Lower lobe of right lung (tissue), 2 donors: ENCODE measurements at regions of chr15 and their contacts with region 1.

Region 1: DNA sequence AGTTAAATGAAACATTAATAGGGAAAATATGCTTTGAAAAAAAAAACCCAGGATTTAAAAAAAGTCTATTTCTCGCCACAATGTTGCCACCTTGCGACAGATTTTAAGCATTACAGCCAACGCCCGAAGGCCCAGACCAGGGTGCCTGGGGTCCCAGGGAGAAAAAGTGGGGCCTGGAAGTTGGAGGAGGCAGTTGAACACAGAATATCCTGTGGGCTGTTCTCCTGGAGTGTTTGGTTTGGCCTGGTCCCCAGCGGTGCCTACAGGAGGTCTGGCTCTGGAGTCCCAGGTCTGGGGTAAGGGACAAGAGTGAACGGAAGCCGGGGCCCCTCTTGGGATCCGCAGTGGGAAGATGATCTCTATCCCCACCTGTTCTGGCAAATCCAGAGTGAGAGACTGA is 3.4 kb downstream of the RNU6-1 start:
- DNase-seq: no peak
- ATAC-seq: no peak
- H3K4me3 ChIP-seq: peak overlapping the region; percentile 55
- H3K27ac ChIP-seq: no peak overlapping the region
- H3K4me1 ChIP-seq: peaks cover 60% of the 10 kb centered on the region
- H3K27me3 ChIP-seq: peaks cover 48% of the 10 kb centered on the region
- CTCF ChIP-seq: peak; percentile 89

Region 2: DNA sequence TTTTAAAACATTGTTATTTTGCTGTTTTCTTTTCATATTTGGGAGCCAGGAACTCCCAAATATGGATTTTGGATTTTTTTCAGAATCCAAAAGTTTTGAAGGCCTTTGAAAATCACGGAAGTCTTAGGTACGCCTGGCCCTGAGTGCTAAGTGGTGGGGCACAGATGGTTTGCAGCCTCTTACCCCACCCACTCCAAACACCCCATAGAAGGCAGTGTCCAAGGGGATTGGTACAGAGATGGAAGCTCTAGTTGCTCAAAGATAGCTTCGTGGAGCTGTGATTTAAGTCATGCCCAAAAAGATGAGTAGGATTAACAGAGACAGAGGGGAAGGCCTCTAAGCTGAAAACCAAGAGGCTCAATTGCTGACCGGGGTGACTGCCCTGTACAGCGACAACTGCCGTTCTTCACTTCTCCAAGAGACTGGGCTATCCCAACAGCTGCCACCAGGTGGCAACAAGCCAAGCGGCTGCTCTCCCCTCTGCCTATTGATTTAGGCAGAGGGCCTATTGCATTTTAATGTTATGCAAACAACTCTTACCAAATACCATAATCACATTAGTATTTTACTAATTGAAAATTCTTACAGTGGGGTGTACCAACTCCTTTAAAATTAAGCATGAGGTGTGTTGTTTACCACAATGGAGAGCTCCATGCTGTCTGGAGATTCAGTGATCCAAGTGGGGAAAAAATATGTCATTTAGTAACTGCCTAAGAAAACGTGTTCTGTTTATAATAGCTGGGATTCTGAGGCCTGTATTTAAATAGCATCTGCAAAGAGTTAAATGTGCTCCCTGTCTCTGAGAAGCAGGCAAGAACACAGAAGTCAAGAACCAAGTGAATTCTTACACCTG is 379.6 kb before region 1 on chr15:
- intact Hi-C with region 1: loop called (anchors 2 kb)
- DNase-seq: peak; percentile 88
- ATAC-seq: peak; percentile 94 to 95
- H3K4me3 ChIP-seq: no peak overlapping the region
- H3K27ac ChIP-seq: no peak overlapping the region
- H3K4me1 ChIP-seq: no peaks in the 10 kb centered on the region
- H3K27me3 ChIP-seq: no peaks in the 10 kb centered on the region
- CTCF ChIP-seq: peak; percentile 91